CD4-positive, alpha-beta T cell (primary cell): ENCODE measurements at regions of chr12 and their contacts with region 1.

Region 1: GRCh38 chr12:53180220-53180930 is at the starts of genes CSAD and ZNF740:
- DNase-seq: peak; percentile 92 to 99 (median 97)
- ATAC-seq: peak; percentile 93
- H3K4me3 ChIP-seq: peak within 1 kb of the TSS; percentile 94
- H3K4me3 Mint-ChIP-seq: peak within 1 kb of the TSS; percentile 98
- H3K27ac ChIP-seq: peak within 1 kb of the TSS; percentile 87 to 92
- H3K27ac Mint-ChIP-seq: peak within 1 kb of the TSS; percentile 94
- H3K4me1 ChIP-seq: peaks cover 52% of the 10 kb centered on the region
- H3K4me1 Mint-ChIP-seq: peaks cover 57% of the 10 kb centered on the region
- H3K27me3 ChIP-seq: no peaks in the 10 kb centered on the region
- H3K27me3 Mint-ChIP-seq: no peaks in the 10 kb centered on the region
- CTCF ChIP-seq: no peak
- total RNA-seq, gene CSAD: 56.7 to 57.3 TPM
- total RNA-seq, gene ZNF740: 24.4 to 24.7 TPM

Region 2: DNA sequence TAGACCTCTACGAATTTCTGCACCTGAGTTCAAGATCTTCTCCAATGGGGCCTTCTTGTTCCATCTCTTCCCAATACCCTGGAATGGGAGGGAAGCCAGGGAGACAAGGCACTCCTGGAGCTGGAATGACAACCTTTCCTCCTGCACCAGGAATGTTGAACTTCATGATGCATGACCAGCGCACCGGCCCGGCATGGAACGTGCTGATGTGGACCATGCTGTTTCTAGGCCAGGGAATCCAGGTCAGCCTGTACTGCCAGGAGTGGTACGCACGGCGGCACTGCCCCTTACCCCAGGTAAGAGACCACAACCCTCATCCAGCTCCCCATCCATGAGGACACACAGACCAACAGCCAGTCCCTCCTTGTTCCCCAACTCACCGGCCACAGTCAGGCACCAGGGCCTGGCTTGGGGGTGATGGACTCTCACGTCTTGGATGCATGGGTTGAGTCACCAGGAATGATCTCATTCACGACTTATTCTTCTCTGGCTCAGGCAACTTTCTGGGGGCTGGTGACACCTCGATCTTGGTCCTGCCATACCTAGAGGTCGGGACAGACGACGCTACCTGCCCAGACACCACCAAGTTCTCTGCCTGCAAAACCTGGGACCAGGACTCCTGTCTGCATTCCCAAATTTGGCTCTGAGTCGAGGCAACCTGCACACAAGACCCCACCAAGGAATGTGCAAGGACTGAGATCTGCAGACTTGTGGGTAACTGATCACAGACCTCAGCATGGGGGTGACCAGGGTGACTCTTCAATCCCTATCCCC is 56.6 kb before region 1 on chr12:
- CTCF ChIA-PET with region 1: no interaction called
- POLR2A ChIA-PET with region 1: no interaction called
- intact Hi-C with region 1: no loop called
- DNase-seq: no peak
- ATAC-seq: no peak
- H3K4me3 ChIP-seq: no peak overlapping the region
- H3K4me3 Mint-ChIP-seq: no peak overlapping the region
- H3K27ac ChIP-seq: no peak overlapping the region
- H3K27ac Mint-ChIP-seq: no peak overlapping the region
- H3K4me1 ChIP-seq: no peaks in the 10 kb centered on the region
- H3K4me1 Mint-ChIP-seq: no peaks in the 10 kb centered on the region
- H3K27me3 ChIP-seq: no peaks in the 10 kb centered on the region
- H3K27me3 Mint-ChIP-seq: no peaks in the 10 kb centered on the region
- CTCF ChIP-seq: no peak

Region 3: DNA sequence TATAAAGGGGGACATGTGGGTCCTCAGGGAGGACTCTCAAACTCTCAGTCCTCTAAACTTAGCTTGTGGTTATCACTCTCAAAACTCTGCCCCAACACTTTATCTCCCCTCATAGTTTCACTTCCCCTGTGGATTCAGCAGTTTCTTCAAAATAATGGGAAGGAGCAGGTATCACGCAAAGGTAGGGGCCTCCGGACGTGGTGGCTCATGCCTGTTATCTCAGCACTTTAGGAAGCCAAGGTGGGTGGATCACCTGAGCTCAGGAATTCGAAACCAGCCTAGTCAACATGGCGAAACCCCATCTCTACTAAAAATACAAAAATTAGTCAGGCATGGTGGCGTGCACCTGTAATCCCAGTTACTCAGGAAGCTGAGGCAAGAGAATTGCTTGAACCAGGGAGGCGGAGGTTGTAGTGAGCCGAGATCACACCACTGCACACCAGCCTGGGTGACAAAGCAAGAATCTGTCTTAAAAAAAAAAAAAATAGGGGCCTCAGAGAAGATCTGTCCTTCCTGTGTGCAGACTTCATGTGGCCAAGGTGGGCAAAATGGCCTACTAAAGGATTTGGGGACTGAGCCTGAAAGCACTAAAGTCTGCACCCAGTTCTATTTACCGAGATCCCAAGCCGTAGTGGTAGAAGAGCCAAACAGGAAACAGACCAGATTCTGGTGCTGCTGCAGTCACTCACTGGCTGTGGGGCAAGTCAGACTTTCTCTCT is 20.2 kb after region 1 on chr12:
- CTCF ChIA-PET with region 1: interaction called, 3 read pairs
- POLR2A ChIA-PET with region 1: interaction called, 53 read pairs
- intact Hi-C with region 1: loop called in 1 of 2 experiments (anchors 2 kb)
- DNase-seq: peak in 4 of 14 experiments; percentile 40 to 53 (median 47)
- ATAC-seq: peak; percentile 53
- H3K4me3 ChIP-seq: peak overlapping the region; percentile 19
- H3K4me3 Mint-ChIP-seq: peak overlapping the region; percentile 86
- H3K27ac ChIP-seq: peak overlapping the region; percentile 31 to 63
- H3K27ac Mint-ChIP-seq: peak overlapping the region; percentile 88
- H3K4me1 ChIP-seq: peaks cover 89% of the 10 kb centered on the region
- H3K4me1 Mint-ChIP-seq: peaks cover 81% of the 10 kb centered on the region
- H3K27me3 ChIP-seq: no peaks in the 10 kb centered on the region
- H3K27me3 Mint-ChIP-seq: no peaks in the 10 kb centered on the region
- CTCF ChIP-seq: no peak

Region 4: GRCh38 chr12:53205747-53206419 is 25.5 kb after region 1 on chr12:
- CTCF ChIA-PET with region 1: interaction called, 5 read pairs
- POLR2A ChIA-PET with region 1: interaction called, 53 read pairs
- intact Hi-C with region 1: no loop called
- DNase-seq: peak in 11 of 14 experiments; percentile 31 to 75 (median 55)
- ATAC-seq: peak; percentile 43
- H3K4me3 ChIP-seq: peak overlapping the region; percentile 84
- H3K4me3 Mint-ChIP-seq: peak overlapping the region; percentile 84
- H3K27ac ChIP-seq: peak overlapping the region; percentile 70 to 82
- H3K27ac Mint-ChIP-seq: peak overlapping the region; percentile 73
- H3K4me1 ChIP-seq: peaks cover 90% of the 10 kb centered on the region
- H3K4me1 Mint-ChIP-seq: peaks cover 72% of the 10 kb centered on the region
- H3K27me3 ChIP-seq: no peaks in the 10 kb centered on the region
- H3K27me3 Mint-ChIP-seq: no peaks in the 10 kb centered on the region
- CTCF ChIP-seq: no peak

Region 5: GRCh38 chr12:53267999-53268647 is 87.7 kb after region 1 on chr12 and contains the start of gene ESPL1:
- CTCF ChIA-PET with region 1: interaction called, 7 read pairs
- POLR2A ChIA-PET with region 1: interaction called, 25 read pairs
- intact Hi-C with region 1: loop called in 1 of 2 experiments (anchors 2 kb)
- DNase-seq: peak; percentile 55 to 93 (median 74)
- ATAC-seq: peak; percentile 91
- H3K4me3 ChIP-seq: peak within 1 kb of the TSS; percentile 86
- H3K4me3 Mint-ChIP-seq: peak within 1 kb of the TSS; percentile 95
- H3K27ac ChIP-seq: peak within 1 kb of the TSS; percentile 40 to 50
- H3K27ac Mint-ChIP-seq: peak within 1 kb of the TSS; percentile 82
- H3K4me1 ChIP-seq: peaks cover 18% of the 10 kb centered on the region
- H3K4me1 Mint-ChIP-seq: peaks cover 19% of the 10 kb centered on the region
- H3K27me3 ChIP-seq: no peaks in the 10 kb centered on the region
- H3K27me3 Mint-ChIP-seq: no peaks in the 10 kb centered on the region
- CTCF ChIP-seq: peak; percentile 36
- total RNA-seq, gene ESPL1: 0.20 to 0.71 TPM

Region 6: DNA sequence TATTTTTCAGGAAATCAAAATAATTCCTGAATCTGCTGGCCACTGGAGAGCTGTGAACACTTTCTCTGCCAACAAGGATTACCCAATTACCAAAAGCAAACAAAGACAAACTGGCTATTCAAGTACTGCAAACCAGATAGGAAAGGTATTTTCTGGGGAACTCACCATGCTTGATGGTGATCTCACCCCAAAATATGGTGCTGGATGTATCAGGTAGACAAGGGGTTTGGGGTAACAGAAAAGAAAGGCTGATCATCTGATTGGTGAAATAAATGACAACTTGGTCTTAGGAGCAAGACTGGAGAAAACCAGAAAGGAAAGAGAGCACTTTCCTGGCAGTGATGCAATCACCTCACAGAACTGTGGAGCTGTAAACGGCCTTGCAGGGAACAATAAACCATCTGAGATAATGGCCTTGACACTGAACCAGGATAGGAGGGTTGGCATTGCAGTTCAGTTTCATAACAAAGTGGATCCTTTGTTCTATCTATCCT is 357.9 kb after region 1 on chr12:
- CTCF ChIA-PET with region 1: no interaction called
- POLR2A ChIA-PET with region 1: no interaction called
- intact Hi-C with region 1: no loop called
- DNase-seq: no peak
- ATAC-seq: no peak
- H3K4me3 ChIP-seq: no peak overlapping the region
- H3K4me3 Mint-ChIP-seq: no peak overlapping the region
- H3K27ac ChIP-seq: no peak overlapping the region
- H3K27ac Mint-ChIP-seq: no peak overlapping the region
- H3K4me1 ChIP-seq: no peaks in the 10 kb centered on the region
- H3K4me1 Mint-ChIP-seq: peaks cover under 1% of the 10 kb centered on the region
- H3K27me3 ChIP-seq: no peaks in the 10 kb centered on the region
- H3K27me3 Mint-ChIP-seq: no peaks in the 10 kb centered on the region
- CTCF ChIP-seq: no peak